ENCODE measurements at regions of chr22 and their contacts with region 1.

Region 1: DNA sequence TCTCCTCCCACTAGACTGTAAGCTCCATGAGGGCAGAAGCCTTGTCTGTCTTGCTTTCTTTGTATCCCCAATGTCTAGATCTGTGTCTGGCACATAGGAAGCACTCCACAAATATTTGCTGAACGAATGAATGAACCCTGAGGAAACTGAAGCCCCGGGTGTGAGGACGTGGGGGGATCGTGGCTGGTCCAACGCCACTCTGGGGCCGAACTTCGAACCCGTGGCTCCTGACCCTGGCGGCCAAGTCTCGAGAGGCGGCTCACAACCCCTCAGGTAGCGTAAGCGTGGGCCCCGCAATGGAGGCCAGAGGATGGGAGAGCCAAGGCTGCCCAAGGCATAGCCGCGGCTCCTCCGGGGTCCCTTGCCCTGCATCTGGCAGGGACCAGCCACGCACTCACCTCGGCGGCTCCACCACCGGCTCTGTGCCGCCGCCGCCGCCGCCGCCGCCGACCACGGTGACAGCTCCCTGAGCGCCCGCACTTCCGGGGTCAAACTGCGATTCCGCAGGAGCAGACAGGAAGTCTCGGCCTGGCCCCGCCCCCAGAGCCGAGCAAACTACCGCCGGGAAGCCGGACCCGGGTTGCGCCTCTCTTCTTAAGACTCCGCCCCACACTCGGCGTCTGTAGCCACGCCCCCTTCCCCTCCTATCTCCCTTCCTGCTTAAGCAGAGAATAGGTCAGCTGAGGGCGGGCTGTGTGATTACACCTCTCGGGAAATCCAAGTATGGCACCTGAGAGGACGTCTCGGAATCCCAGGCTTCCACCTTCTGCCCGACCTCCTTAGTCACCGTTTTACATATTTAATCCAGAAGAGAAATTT is at the start of gene ASCC2:
- DNase-seq: peak; percentile 92
- ATAC-seq: peak; percentile 98
- H3K4me3 ChIP-seq: peak within 1 kb of the TSS; percentile 81
- H3K27ac ChIP-seq: peak within 1 kb of the TSS; percentile 60
- H3K4me1 ChIP-seq: 0 out of 2 replicates have a peak, but pooled peaks cover 2% of the 10 kb centered on the region
- H3K27me3 ChIP-seq: no peaks in the 10 kb centered on the region
- CTCF ChIP-seq: no peak
- POLR2A ChIP-seq: peak; percentile 44; the same call in 1 of the 2 replicates
- RAD21 ChIP-seq: no peak
- total RNA-seq, gene ASCC2: 38.6 and 40.0 TPM in 2 replicates

Region 2: DNA sequence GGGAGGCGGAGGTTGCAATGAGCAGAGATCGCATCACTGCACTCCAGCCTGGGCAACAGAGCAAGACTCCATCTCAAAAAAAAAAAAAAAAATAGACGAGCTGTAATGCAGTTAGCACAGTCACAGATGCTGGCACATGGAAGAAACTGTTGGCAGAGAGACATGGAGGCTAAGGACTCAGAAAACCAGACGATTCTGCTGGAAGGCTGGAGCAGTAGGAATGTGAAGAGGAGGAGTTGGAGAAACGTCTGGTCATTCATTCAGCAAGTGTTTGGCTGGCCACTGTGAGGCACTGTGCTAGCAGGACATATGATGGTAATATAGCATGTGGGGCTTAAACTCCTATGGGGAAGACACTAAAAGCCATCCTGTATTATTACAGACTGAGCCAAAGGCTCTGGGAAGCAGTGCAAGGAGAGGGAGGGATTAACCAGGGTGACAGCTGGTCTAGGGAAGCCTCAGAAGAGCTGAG is 65.8 kb before region 1 on chr22:
- CTCF ChIA-PET with region 1: no interaction called
- POLR2A ChIA-PET with region 1: no interaction called
- dilution Hi-C with region 1: no loop called
- in situ Hi-C with region 1: no loop called
- intact Hi-C with region 1: loop called (anchors 2 kb)
- DNase-seq: peak; percentile 76
- ATAC-seq: peak; percentile 79
- H3K4me3 ChIP-seq: no peak overlapping the region
- H3K27ac ChIP-seq: no peak overlapping the region
- H3K4me1 ChIP-seq: peaks cover 10% of the 10 kb centered on the region; the same call in 1 of the 2 replicates
- H3K27me3 ChIP-seq: no peaks in the 10 kb centered on the region
- CTCF ChIP-seq: peak; percentile 61
- POLR2A ChIP-seq: no peak
- RAD21 ChIP-seq: peak; percentile 59

Region 3: DNA sequence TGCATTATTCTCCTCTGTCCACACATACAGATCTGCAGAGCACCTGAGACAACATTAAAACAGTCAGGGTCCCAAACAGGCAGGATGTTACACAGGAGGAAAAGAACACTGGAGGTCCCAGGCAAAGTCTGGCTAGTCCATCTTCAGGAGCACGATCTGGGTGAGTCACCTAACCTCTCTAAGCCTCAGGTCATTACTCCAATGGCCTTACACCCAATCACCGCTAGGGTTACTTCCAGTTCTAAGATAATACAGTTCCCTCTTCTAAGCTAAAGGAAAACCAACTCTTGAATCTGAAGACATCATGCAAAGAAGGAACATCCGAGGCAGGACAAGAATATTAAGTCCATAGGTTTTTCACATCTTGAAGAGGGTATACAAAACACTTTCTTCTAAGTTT is 24.4 kb before region 1 on chr22:
- CTCF ChIA-PET with region 1: no interaction called
- POLR2A ChIA-PET with region 1: interaction called, 11 read pairs
- dilution Hi-C with region 1: no loop called
- in situ Hi-C with region 1: no loop called
- intact Hi-C with region 1: no loop called
- DNase-seq: no peak
- ATAC-seq: peak; percentile 59; the same call in 1 of the 2 replicates
- H3K4me3 ChIP-seq: no peak overlapping the region
- H3K27ac ChIP-seq: no peak overlapping the region
- H3K4me1 ChIP-seq: peaks cover 1% of the 10 kb centered on the region; the same call in 1 of the 2 replicates
- H3K27me3 ChIP-seq: no peaks in the 10 kb centered on the region
- CTCF ChIP-seq: 0 out of 2 replicates have a peak, but pooled peaks have one; percentile 1
- POLR2A ChIP-seq: no peak
- RAD21 ChIP-seq: no peak

Region 4: GRCh38 chr22:29867260-29867659 is 29.3 kb after region 1 on chr22:
- CTCF ChIA-PET with region 1: no interaction called
- POLR2A ChIA-PET with region 1: no interaction called
- dilution Hi-C with region 1: no loop called
- in situ Hi-C with region 1: no loop called
- intact Hi-C with region 1: no loop called
- DNase-seq: no peak
- ATAC-seq: no peak
- H3K4me3 ChIP-seq: no peak overlapping the region
- H3K27ac ChIP-seq: no peak overlapping the region
- H3K4me1 ChIP-seq: 0 out of 2 replicates have a peak, but pooled peaks cover 2% of the 10 kb centered on the region
- H3K27me3 ChIP-seq: no peaks in the 10 kb centered on the region; the same call in 1 of the 2 replicates
- CTCF ChIP-seq: no peak
- POLR2A ChIP-seq: no peak
- RAD21 ChIP-seq: no peak

Region 5: DNA sequence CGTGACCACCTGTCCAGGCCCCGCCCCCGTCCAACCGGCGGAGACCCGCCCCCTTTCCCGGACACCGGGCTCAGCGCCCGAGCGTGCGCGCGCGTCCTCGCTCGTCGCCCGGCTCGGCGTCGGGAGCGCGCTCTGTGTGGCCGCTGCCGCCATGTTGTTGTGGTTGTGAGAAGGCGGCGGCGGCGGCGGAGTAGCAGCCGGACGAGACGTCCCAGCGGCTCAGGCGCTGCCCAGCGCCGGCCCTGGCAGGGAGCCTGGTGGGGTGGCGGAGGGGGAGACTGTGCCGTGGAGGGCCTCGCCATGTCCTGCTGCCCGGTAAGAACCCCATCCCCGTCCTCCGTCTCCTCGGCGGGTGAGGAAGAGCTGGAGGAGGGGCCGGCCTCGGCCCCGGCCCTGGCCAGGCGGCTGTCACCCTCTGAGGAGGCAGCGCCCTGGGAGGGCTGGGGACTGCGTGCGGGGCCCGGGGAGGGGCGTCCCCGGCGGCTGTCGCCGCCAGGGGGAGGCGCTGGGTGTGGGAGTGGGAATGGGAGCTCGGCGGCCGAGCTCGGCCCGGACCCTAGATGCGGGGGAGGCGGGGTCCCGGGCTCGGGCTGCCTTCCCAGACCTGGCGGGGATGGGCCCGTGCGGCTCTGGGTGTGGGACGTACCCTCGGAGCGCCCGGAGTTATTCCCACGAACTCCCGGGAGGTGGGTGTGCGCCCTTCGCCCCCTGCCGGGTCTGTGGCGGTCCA is 45.2 kb after region 1 on chr22 and contains the start of gene MTMR3:
- CTCF ChIA-PET with region 1: no interaction called
- POLR2A ChIA-PET with region 1: no interaction called
- dilution Hi-C with region 1: no loop called
- in situ Hi-C with region 1: no loop called
- intact Hi-C with region 1: loop called (anchors 2 kb)
- DNase-seq: peak; percentile 84
- ATAC-seq: peak; percentile 89
- H3K4me3 ChIP-seq: peak within 1 kb of the TSS; percentile 100
- H3K27ac ChIP-seq: peak within 1 kb of the TSS; percentile 83
- H3K4me1 ChIP-seq: peaks cover 5% of the 10 kb centered on the region
- H3K27me3 ChIP-seq: no peaks in the 10 kb centered on the region
- CTCF ChIP-seq: peak; percentile 42
- POLR2A ChIP-seq: peak; percentile 60
- RAD21 ChIP-seq: peak; percentile 25; the same call in 1 of the 2 replicates
- total RNA-seq, gene MTMR3: 26.1 and 29.4 TPM in 2 replicates

Region 6: GRCh38 chr22:29925402-29925801 is 87.4 kb after region 1 on chr22:
- CTCF ChIA-PET with region 1: no interaction called
- POLR2A ChIA-PET with region 1: no interaction called
- dilution Hi-C with region 1: no loop called
- in situ Hi-C with region 1: no loop called
- intact Hi-C with region 1: no loop called
- DNase-seq: no peak
- ATAC-seq: no peak
- H3K4me3 ChIP-seq: no peak overlapping the region
- H3K27ac ChIP-seq: no peak overlapping the region
- H3K4me1 ChIP-seq: peaks cover 3% of the 10 kb centered on the region; the same call in 1 of the 2 replicates
- H3K27me3 ChIP-seq: no peaks in the 10 kb centered on the region
- CTCF ChIP-seq: no peak
- POLR2A ChIP-seq: no peak
- RAD21 ChIP-seq: no peak